Sigmoid colon (tissue), 7 donors: ENCODE measurements at regions of chr6 and their contacts with region 1.

Region 1: GRCh38 chr6:29797966-29798365 is 29.7 kb upstream of the HLA-G start:
- DNase-seq: no peak
- H3K4me3 ChIP-seq: no peak overlapping the region
- H3K27ac ChIP-seq: no peak overlapping the region
- H3K4me1 ChIP-seq: peaks cover 0 to 3% (median 1%) of the 10 kb centered on the region in 4 donors
- H3K27me3 ChIP-seq: peaks cover 0 to 23% (median 0%) of the 10 kb centered on the region in 3 donors
- CTCF ChIP-seq: no peak
- EP300 ChIP-seq: no peak
- POLR2A ChIP-seq: no peak

Region 2: GRCh38 chr6:29414588-29414987 is 383.4 kb before region 1 on chr6 and contains the start of gene OR12D1:
- intact Hi-C with region 1: no loop called
- DNase-seq: no peak
- H3K4me3 ChIP-seq: no peak within 1 kb of the TSS
- H3K27ac ChIP-seq: no peak within 1 kb of the TSS
- H3K4me1 ChIP-seq: no peaks in the 10 kb centered on the region
- H3K27me3 ChIP-seq: no peaks in the 10 kb centered on the region
- CTCF ChIP-seq: no peak
- EP300 ChIP-seq: no peak
- POLR2A ChIP-seq: no peak
- total RNA-seq, gene OR12D1: not detected

Region 3: DNA sequence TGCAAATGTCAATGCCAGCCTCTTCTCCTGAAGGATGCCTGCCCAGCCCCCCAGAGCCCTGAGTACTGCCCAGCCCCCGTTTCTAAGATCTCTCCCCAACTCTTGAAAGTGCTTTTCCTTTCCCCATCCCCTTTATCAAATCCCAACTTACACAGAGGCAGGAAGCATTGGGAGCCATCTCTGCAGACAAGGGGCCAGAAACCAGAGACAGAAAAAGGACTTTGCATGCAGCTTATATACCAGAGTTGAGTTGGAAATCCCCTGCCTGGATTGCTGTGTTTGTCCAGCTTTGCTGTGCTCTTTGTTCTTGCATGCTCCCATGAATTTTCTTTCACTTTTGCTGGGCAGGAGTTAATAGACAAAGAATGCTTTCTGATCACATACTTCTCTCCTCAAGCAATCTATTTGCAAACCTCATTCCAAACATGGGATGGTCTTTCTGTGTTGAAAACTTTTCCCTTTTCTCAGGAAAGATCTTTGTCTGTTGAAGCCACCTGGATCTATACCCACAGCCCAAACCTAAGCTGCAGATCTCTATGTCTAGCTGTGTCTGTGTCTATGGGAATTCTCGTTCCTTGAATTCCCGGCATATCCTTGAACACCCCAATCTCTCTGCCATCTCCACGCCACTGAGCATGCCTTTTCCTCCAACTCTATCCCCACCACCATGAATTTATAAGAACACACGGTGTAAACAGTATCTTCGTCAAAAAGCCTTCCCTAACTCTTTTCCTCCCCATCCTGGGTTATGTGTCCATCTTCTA is 238.3 kb before region 1 on chr6 and contains the start of gene UBD:
- intact Hi-C with region 1: no loop called
- DNase-seq: no peak
- H3K4me3 ChIP-seq: no peak within 1 kb of the TSS
- H3K27ac ChIP-seq: no peak within 1 kb of the TSS
- H3K4me1 ChIP-seq: no peaks in the 10 kb centered on the region
- H3K27me3 ChIP-seq: peaks cover 4 to 29% (median 5%) of the 10 kb centered on the region in 3 donors
- CTCF ChIP-seq: no peak
- EP300 ChIP-seq: no peak
- POLR2A ChIP-seq: no peak
- total RNA-seq, gene UBD: 0.71 TPM in 1 of 4 donors, not detected in the others

Region 4: GRCh38 chr6:29953686-29954085 is 155.7 kb after region 1 on chr6:
- intact Hi-C with region 1: loop called (anchors 2 kb)
- DNase-seq: no peak
- H3K4me3 ChIP-seq: no peak overlapping the region
- H3K27ac ChIP-seq: peak overlapping the region in 1 of 4 donors; percentile 20
- H3K4me1 ChIP-seq: peaks cover 0 to 11% (median 0%) of the 10 kb centered on the region in 4 donors
- H3K27me3 ChIP-seq: no peaks in the 10 kb centered on the region
- CTCF ChIP-seq: no peak
- EP300 ChIP-seq: no peak
- POLR2A ChIP-seq: no peak